Activated CD4-positive, alpha-beta T cell treated with anti-CD3 and anti-CD28 coated beads, Interleukin-2, amount 10 ng/mL, durations not matched to agents 24 days and 14 days (primary cell): ENCODE measurements at regions of chr6 and their contacts with region 1.

Region 1: GRCh38 chr6:12011276-12012076 is 636 bp upstream of the HIVEP1 start:
- DNase-seq: peak; percentile 97
- H3K4me3 Mint-ChIP-seq: peak overlapping the region; percentile 96
- H3K27ac Mint-ChIP-seq: peak overlapping the region; percentile 99
- H3K4me1 Mint-ChIP-seq: peaks cover 46% of the 10 kb centered on the region
- H3K27me3 Mint-ChIP-seq: no peaks in the 10 kb centered on the region

Region 2: DNA sequence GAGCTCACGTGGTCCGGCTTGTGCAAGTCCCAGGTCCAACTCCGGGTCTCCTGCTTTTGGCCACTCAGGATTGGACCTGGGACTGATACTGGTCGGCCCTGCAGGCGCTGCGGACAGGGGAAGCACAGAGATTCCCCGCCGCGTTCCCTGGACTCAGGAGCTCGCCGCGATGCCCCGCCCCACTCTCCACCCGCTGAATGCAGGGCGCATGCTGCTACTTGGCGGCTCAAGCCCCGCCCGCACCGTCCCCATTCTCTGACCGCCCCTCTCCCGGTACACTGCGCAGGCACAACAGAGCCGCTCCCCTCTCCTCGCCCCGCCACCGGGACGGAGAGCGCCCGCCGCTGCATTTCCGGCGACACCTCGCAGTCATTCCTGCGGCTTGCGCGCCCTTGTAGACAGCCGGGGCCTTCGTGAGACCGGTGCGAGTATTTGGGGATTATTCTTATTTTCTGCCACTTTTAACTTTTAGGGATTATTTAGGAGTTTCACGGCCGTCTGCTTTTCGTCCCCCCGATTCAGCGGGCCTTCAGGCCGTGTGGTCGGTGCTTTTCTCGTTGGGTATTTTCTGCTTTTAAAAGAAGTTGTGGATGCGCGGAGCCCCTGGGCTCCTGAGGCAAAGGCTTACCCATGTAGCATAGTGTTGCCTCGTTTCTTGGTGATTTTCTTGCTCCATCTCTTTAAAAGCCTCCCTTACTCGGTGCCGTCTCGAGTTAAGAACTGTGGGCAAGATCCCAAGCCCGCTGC is 1288.5 kb before region 1 on chr6 and contains the start of gene TMEM14C:
- intact Hi-C with region 1: loop called (anchors 5 kb)
- DNase-seq: peak; percentile 97
- H3K4me3 Mint-ChIP-seq: peak within 1 kb of the TSS; percentile 89
- H3K27ac Mint-ChIP-seq: peak within 1 kb of the TSS; percentile 93
- H3K4me1 Mint-ChIP-seq: peaks cover 27% of the 10 kb centered on the region
- H3K27me3 Mint-ChIP-seq: no peaks in the 10 kb centered on the region
- total RNA-seq, gene TMEM14C: 65.0 and 67.7 TPM in 2 replicates

Region 3: GRCh38 chr6:11711003-11711983 is 300.2 kb before region 1 on chr6:
- intact Hi-C with region 1: loop called (anchors 1 kb)
- DNase-seq: peak; percentile 80
- H3K4me3 Mint-ChIP-seq: peak overlapping the region; percentile 83
- H3K27ac Mint-ChIP-seq: peak overlapping the region; percentile 99
- H3K4me1 Mint-ChIP-seq: peaks cover 71% of the 10 kb centered on the region
- H3K27me3 Mint-ChIP-seq: no peaks in the 10 kb centered on the region

Region 4: DNA sequence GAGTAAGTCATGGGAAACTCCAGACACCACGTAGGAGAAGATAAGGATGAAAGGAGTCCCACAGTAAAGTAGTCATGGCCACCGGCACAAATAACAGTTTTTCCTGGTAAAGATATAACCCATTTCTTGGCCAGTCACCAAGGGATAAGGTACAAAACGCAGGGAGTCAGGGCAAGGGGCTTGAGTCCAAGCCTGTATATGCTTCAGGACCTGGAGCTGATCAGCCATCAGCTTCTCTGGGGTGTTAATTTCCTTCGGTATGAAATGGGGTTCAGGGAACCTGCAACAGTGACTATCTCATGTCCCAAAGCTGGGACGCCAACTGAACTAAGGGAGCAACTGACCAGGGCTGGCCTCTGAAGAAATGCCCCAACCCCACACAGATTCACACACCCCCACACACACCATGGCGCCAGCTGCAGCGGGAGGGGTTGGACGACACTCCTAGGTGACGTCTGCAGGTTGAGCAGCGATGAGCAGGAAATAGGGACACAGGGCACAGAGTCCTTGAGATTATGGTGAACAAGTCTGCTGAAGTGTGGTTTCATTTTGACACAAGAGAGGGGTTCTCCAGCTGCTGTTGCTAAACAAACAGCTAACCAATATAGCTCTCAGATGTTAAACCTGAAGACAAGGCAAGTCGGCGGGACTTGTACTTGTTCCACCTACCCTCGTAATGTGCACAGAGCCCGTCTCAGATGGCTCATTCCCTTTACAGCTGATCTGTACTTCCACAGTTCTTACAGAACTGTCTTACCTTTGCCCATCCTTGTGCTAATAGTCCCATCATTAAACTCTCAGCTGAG is 225.5 kb before region 1 on chr6:
- intact Hi-C with region 1: loop called (anchors 1 kb)
- DNase-seq: peak; percentile 82
- H3K4me3 Mint-ChIP-seq: peak overlapping the region; percentile 46
- H3K27ac Mint-ChIP-seq: peak overlapping the region; percentile 72
- H3K4me1 Mint-ChIP-seq: peaks cover 7% of the 10 kb centered on the region
- H3K27me3 Mint-ChIP-seq: no peaks in the 10 kb centered on the region

Region 5: DNA sequence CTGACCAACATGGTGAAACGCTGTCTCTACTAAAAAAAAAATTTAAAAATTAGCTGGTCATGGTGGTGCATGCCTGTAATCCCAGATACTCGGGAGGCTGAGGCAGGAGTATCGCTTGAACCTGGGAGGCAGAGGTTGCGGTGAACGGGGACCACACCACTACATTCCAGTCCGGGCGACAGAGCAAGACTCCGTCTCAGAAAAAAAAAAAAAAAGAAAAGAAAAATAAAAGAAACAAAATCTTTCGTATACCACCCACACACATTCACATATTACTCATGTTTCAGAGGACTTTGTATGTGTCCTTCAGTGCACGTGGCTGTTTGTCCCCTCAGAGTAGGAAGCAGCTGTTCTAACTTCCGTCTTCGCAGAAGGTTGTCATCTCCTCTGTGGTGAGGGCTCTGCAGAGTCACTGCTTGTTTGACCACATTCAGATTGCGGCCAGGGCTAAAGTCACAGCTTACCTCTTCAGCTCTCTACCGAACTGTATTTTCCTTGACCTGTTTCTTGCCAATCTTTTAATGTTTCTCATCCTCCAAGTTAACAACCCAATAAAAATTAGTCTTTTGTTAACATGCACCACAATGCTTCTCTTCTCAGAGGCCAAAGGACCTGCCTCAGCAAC is 36.0 kb before region 1 on chr6:
- intact Hi-C with region 1: loop called (anchors 2 kb)
- DNase-seq: peak; percentile 76
- H3K4me3 Mint-ChIP-seq: peak overlapping the region; percentile 3
- H3K27ac Mint-ChIP-seq: peak overlapping the region; percentile 5
- H3K4me1 Mint-ChIP-seq: peaks cover 17% of the 10 kb centered on the region
- H3K27me3 Mint-ChIP-seq: peaks cover under 1% of the 10 kb centered on the region

Region 6: GRCh38 chr6:12039540-12040459 is 28.3 kb after region 1 on chr6:
- intact Hi-C with region 1: no loop called
- DNase-seq: no peak
- H3K4me3 Mint-ChIP-seq: no peak overlapping the region
- H3K27ac Mint-ChIP-seq: peak overlapping the region; percentile 43
- H3K4me1 Mint-ChIP-seq: peaks cover 57% of the 10 kb centered on the region
- H3K27me3 Mint-ChIP-seq: no peaks in the 10 kb centered on the region

Region 7: GRCh38 chr6:12119085-12119588 is 107.7 kb after region 1 on chr6:
- intact Hi-C with region 1: loop called (anchors 1 kb)
- DNase-seq: peak; percentile 92
- H3K4me3 Mint-ChIP-seq: peak overlapping the region; percentile 41
- H3K27ac Mint-ChIP-seq: peak overlapping the region; percentile 78
- H3K4me1 Mint-ChIP-seq: peaks cover 64% of the 10 kb centered on the region
- H3K27me3 Mint-ChIP-seq: no peaks in the 10 kb centered on the region